Activated CD4-positive, alpha-beta memory T cell treated with anti-CD3 and anti-CD28 coated beads for 36 hours (primary cell): ENCODE measurements at regions of chrX and their contacts with region 1.

Region 1: GRCh38 chrX:102659790-102660757 is 8.8 kb downstream of the GPRASP1 start:
- DNase-seq: peak; percentile 90
- H3K4me3 Mint-ChIP-seq: peak overlapping the region; percentile 90
- H3K27ac Mint-ChIP-seq: peak overlapping the region; percentile 73
- H3K4me1 Mint-ChIP-seq: peaks cover 18% of the 10 kb centered on the region
- H3K27me3 Mint-ChIP-seq: no peaks in the 10 kb centered on the region

Region 2: DNA sequence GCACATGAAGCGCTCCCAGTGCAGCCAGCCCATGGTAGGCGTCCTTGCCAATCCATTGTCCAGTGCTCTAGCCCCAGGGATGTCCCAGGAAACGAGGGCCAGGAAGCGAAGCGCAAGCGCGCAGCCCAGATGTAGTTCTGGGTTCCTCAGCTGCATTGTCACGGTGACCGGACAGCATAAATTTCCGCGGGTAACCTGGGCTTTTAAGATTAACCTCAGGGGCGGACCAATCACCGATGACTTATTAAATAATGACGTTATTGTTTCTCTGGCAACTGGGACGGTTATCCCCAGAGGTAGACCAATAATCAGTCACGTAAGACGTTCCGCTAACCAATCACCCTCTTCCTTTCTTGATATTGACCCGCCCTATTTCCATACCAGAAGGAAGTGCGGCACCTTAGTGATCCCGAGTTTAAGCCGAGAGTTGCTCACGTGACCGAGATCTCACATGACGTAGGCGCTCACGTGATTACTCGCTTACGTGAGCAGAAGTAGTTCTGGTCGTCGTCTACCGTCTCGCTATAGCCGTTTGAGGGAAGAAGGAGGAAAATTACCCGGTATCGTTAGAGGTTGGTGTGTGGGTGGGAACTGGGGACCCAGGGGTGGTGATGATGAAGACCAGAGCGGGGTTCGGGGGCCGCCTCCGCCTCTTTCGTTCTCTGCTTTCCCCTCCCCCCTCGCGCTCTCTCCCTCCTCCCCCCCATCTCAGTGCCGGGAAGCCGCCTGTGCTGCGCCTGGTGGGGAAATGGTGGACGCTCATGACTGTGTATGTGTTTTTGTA is 1252.1 kb before region 1 on chrX and contains the starts of genes GLA and HNRNPH2:
- CTCF ChIA-PET with region 1: no interaction called
- POLR2A ChIA-PET with region 1: no interaction called
- intact Hi-C with region 1: loop called (anchors 10 kb)
- DNase-seq: peak; percentile 94
- H3K4me3 Mint-ChIP-seq: peak within 1 kb of the TSS; percentile 89
- H3K27ac Mint-ChIP-seq: peak within 1 kb of the TSS; percentile 98
- H3K4me1 Mint-ChIP-seq: peaks cover 25% of the 10 kb centered on the region
- H3K27me3 Mint-ChIP-seq: peaks cover 2% of the 10 kb centered on the region
- total RNA-seq, gene GLA: 40.4 to 43.6 TPM
- total RNA-seq, gene HNRNPH2: 32.5 to 33.8 TPM

Region 3: DNA sequence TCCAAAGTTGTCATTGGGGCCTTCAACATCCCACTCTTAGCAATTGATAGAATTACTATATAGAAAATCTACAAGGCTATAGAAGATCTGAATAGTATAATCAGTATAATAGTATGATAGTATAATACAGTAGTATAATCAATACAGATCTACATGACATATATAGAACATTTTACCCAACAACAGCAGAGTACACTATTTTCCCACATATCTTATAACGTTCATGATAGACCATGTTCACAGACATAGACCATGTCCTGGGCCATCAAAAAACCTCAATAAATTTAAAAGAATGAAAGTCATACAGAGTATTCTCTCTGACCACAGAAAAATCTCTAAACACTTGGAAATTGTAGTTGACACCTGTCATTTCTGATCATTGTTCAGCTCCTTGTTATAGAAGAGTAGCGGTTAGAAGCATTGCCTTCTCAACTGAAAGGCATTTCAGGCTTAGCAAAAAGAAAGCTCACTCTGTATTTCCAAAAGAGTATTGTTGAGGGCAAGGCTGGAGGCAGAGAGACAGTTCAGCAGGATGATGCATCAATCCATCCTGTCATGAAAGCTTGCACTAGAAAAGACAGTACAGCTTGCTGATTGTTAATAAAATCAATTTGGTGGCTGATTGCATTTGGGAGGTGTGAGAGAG is 99.5 kb before region 1 on chrX:
- CTCF ChIA-PET with region 1: no interaction called
- POLR2A ChIA-PET with region 1: no interaction called
- intact Hi-C with region 1: loop called (anchors 10 kb)
- DNase-seq: no peak
- H3K4me3 Mint-ChIP-seq: no peak overlapping the region
- H3K27ac Mint-ChIP-seq: no peak overlapping the region
- H3K4me1 Mint-ChIP-seq: no peaks in the 10 kb centered on the region
- H3K27me3 Mint-ChIP-seq: no peaks in the 10 kb centered on the region

Region 4: GRCh38 chrX:102599084-102599950 is 60.8 kb before region 1 on chrX and contains the start of gene ARMCX5:
- CTCF ChIA-PET with region 1: no interaction called
- POLR2A ChIA-PET with region 1: no interaction called
- intact Hi-C with region 1: loop called (anchors 2 kb)
- DNase-seq: peak; percentile 76
- H3K4me3 Mint-ChIP-seq: peak within 1 kb of the TSS; percentile 99
- H3K27ac Mint-ChIP-seq: peak within 1 kb of the TSS; percentile 93
- H3K4me1 Mint-ChIP-seq: peaks cover 30% of the 10 kb centered on the region
- H3K27me3 Mint-ChIP-seq: no peaks in the 10 kb centered on the region
- total RNA-seq, gene ARMCX5: 7.5 to 10.0 TPM

Region 5: DNA sequence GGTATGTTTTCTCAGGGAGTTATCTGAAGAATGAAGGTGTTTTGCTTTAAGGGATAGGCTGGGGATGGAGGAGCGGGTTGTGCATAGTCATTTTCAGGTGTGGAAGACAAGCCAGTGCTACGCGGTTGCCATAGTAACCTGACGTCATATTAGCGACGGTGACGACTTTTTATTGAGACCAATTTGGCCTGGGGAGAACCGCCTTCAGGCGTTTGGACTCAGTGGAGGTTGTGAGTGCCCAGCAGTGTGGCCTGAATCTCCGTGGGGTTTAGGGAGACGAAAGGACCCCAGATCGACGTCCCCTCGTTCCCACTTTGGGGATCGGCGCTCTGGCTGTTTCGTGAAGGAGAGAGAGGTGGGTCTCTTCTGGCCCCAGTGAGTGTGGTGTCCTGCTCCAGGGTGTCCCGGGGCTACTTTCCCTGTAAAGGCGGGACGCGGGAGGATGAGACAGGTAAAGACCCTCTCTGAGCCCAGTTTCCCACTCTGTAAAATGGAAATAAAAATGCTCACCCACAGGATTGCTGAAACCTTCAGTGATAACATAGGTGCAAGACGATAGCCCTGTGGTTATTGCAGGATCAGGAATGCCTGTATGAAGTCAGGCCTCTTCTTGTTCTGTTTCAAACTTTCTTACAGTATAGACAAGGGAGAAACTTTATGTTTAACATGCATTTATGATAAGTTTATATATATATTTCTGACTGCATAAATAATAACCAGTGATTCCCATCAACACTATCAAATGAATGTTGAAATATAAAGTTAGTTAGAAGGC is 109.1 kb after region 1 on chrX:
- CTCF ChIA-PET with region 1: interaction called, 3 read pairs
- POLR2A ChIA-PET with region 1: no interaction called
- intact Hi-C with region 1: loop called (anchors 2 kb)
- DNase-seq: peak; percentile 87
- H3K4me3 Mint-ChIP-seq: peak overlapping the region; percentile 92
- H3K27ac Mint-ChIP-seq: peak overlapping the region; percentile 89
- H3K4me1 Mint-ChIP-seq: peaks cover 9% of the 10 kb centered on the region
- H3K27me3 Mint-ChIP-seq: no peaks in the 10 kb centered on the region

Region 6: DNA sequence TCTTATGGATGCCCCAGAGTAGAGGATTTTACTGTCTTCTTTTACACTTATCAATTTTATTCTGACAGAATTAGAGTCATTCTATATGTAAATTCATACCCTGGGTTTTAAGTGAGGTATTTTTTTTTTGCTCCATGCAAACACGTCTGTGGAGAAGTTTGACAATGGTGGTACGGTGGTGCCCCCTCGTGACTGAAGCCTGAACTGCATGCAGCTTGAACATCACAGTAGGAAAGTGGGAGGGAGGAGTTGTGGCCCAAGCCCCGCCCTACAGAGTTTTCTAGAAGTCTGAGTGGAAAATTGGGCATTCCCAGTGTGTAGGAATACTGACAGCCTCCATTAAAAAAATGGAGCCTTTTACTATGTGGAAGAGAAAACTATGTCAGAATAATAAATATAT is 203.7 kb after region 1 on chrX:
- CTCF ChIA-PET with region 1: no interaction called
- POLR2A ChIA-PET with region 1: no interaction called
- intact Hi-C with region 1: loop called (anchors 10 kb)
- DNase-seq: peak; percentile 87
- H3K4me3 Mint-ChIP-seq: no peak overlapping the region
- H3K27ac Mint-ChIP-seq: no peak overlapping the region
- H3K4me1 Mint-ChIP-seq: no peaks in the 10 kb centered on the region
- H3K27me3 Mint-ChIP-seq: no peaks in the 10 kb centered on the region